ENCODE measurements at regions of chr17 and their contacts with region 1.

Region 1: DNA sequence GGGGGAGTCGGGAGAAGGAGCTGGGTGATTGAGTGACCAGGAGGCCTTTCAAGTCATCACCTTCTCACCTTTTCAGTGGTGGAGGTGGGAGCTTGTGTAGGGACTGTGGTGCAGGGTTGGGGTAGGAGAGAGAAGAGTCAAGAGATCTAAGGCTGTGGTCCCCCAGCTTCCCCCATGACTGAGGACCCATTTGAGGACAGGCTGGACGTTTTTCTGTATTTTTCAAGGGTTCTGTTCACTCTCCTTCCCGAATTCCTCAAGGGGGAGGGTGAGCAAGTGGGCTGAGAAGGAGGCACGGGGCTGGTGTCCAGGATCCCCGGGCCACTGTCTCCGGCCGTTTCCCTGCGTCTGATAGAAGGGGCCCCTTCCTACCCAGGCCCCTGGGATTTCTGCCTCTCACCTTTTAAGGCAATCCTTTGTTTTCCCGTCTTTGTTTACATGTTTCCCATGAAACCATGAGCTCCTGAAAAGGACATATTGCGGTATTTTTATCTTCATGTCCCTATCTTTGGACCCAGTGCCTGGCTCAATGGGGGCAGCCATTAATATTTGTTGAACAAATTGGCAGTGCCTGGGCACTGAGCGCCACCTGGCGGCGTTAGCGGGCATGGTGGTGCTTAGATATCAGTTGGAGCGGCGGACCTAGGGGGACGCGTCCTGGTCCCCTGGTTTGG is 9.2 kb upstream of the CD300A start:
- DNase-seq: no peak
- H3K4me3 ChIP-seq: no peak overlapping the region
- H3K27ac ChIP-seq: no peak overlapping the region
- H3K4me1 ChIP-seq: peaks cover 37% of the 10 kb centered on the region
- H3K27me3 ChIP-seq: no peaks in the 10 kb centered on the region
- CTCF ChIP-seq: peak; percentile 95 to 98 (median 97)
- POLR2A ChIP-seq: no peak

Region 2: DNA sequence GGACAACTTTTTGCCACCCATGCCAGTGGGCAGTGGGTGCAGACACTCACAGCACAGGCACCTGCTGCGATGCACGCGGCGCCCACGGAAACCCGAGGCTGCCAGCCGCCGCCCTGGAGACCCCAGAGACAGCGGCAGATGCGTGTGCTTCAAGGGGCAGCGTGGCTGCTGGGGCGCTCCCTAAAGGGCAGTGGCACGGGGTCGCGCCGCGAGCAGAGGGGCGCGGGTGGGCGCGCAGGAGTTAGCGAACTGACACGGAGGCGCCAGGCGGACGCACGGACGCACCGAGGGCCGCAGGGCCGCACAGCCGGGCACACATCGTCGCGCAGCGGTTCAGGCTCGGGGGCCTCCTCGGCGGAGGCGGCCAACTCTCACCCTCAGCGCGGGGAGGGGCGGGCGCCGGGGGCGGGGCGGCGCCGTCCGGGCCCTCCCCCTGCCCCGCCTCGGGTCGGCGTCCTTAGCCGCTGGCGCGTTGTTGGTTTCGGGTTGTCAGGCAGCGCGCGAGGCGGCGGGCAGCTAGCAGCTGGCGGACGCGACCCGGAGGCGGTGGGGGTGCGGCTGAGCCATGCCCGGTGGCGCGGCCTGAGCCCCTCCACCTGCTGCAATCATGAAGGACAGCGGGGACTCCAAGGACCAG is 131.4 kb before region 1 on chr17 and contains the start of gene KIF19:
- intact Hi-C with region 1: no loop called
- DNase-seq: no peak
- H3K4me3 ChIP-seq: peak within 1 kb of the TSS; percentile 28 to 52
- H3K27ac ChIP-seq: no peak within 1 kb of the TSS
- H3K4me1 ChIP-seq: peaks cover 20% of the 10 kb centered on the region
- H3K27me3 ChIP-seq: no peaks in the 10 kb centered on the region
- CTCF ChIP-seq: no peak
- POLR2A ChIP-seq: no peak
- total RNA-seq, gene KIF19: 5.6 TPM

Region 3: DNA sequence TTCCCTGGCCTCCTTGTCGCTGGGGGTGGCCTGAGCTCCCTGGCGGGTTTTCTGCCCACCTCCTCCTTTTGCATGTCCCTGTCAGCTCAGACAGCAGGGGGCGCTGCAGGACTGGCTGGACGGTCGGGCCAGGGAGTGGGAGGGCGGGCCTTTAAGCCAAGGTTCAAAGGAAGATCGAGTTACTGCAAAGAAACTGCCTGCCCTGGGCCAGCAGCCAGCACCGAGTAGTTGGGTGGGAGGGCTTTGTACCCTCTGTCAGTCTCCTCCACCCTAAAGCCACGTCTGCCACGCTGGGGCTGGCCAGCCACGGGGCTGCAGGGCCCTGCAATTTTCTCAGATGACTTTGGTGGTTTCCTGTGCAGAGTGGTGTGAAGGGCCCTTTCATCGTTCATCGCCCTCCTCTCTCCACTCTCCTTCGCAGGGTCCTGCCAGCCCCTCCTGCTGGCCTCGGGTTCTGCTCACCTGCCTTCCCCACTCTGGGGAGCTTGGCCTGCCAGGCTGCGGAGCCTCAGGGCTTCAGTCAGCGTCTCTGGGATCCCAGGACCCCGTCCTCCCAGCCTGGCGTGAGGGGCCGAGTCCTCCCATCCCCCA is 77.7 kb before region 1 on chr17:
- intact Hi-C with region 1: loop called (anchors 2 kb)
- DNase-seq: no peak
- H3K4me3 ChIP-seq: peak overlapping the region; percentile 5 to 7
- H3K27ac ChIP-seq: no peak overlapping the region
- H3K4me1 ChIP-seq: peaks cover 20% of the 10 kb centered on the region
- H3K27me3 ChIP-seq: no peaks in the 10 kb centered on the region
- CTCF ChIP-seq: peak; percentile 98 to 99 (median 98)
- POLR2A ChIP-seq: no peak

Region 4: DNA sequence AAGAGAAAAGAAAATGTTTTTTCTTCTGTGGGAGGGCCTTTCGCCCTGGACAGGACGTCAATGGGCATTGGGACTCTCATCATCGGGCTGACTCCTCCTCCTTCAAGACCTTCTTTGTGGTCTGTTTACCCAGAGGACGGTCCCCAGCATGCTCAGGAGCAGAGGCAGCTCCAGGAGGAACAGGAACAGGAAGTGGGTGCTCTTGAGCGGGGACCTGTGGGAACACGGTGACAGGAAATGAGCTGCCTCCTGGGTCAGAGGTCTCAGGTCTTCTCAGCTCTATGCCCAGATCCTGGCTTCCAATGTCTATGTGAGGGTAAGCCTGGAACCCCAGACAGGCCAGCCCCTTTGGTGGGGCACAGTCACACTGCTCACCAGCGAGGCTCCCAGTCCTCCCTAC is 122.6 kb after region 1 on chr17:
- intact Hi-C with region 1: no loop called
- DNase-seq: no peak
- H3K4me3 ChIP-seq: no peak overlapping the region
- H3K27ac ChIP-seq: no peak overlapping the region
- H3K4me1 ChIP-seq: no peaks in the 10 kb centered on the region
- H3K27me3 ChIP-seq: no peaks in the 10 kb centered on the region
- CTCF ChIP-seq: no peak
- POLR2A ChIP-seq: no peak

Region 5: GRCh38 chr17:74671031-74671771 is 213.9 kb after region 1 on chr17:
- intact Hi-C with region 1: no loop called
- DNase-seq: no peak
- H3K4me3 ChIP-seq: no peak overlapping the region
- H3K27ac ChIP-seq: no peak overlapping the region
- H3K4me1 ChIP-seq: no peaks in the 10 kb centered on the region
- H3K27me3 ChIP-seq: no peaks in the 10 kb centered on the region
- CTCF ChIP-seq: no peak
- POLR2A ChIP-seq: no peak